Activated naive CD4-positive, alpha-beta T cell treated with anti-CD3 and anti-CD28 coated beads for 36 hours (primary cell): ENCODE measurements at regions of chr16 and their contacts with region 1.

Region 1: GRCh38 chr16:29862884-29863668 is at the start of gene CDIPT:
- DNase-seq: peak; percentile 96
- H3K4me3 Mint-ChIP-seq: peak within 1 kb of the TSS; percentile 95
- H3K27ac Mint-ChIP-seq: peak within 1 kb of the TSS; percentile 99
- H3K4me1 Mint-ChIP-seq: peaks cover 22% of the 10 kb centered on the region
- H3K27me3 Mint-ChIP-seq: no peaks in the 10 kb centered on the region
- total RNA-seq, gene CDIPT: 29.0 to 31.0 TPM

Region 2: DNA sequence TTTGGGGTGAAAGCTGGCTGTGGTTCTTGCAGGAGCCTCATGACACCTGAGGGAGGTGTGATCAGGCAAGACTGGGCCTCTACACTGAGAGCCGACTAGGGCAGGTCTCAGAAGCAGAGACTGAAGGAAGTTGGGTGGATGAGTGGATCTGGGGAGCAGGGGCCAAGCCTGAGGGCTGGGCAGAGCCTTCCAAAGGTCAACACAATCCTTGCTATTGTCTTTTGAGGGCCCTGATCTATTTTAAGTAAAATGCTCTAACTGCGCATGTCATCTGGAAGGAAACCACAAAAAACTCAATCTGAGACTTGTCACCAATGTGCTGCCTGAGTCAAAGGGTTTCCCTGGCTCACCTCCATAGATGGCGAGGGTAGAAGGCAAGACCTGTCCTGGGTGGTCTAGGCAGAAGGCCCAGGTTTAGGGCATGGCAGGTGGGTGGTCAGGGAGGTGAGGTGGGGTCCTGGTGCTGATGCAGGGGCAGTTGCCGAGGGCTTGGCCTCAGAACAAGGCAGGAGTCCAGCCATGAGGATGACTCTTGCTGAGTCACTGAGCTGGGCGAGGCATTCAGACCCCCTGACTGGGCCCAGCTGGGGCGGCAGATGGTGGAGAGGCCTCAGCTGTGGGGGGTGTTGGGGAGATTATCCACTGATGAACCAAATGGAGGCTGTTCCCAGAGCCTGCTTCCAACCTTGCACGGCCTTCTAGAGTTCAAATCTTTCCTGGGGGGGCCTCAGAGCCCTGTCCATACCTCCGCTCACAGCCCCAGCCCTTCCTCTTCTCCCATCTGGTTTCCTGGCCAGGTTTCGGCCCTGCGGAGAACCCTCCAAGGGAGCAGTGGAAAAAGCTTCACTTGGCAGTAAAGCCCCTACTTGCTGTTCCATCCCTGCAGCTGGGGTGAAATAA is 37.7 kb before region 1 on chr16:
- CTCF ChIA-PET with region 1: no interaction called
- intact Hi-C with region 1: loop called (anchors 1 kb)
- DNase-seq: peak; percentile 78
- H3K4me3 Mint-ChIP-seq: peak overlapping the region; percentile 55
- H3K27ac Mint-ChIP-seq: peak overlapping the region; percentile 90
- H3K4me1 Mint-ChIP-seq: peaks cover 81% of the 10 kb centered on the region
- H3K27me3 Mint-ChIP-seq: no peaks in the 10 kb centered on the region

Region 3: GRCh38 chr16:29909391-29909790 is 46.3 kb after region 1 on chr16:
- CTCF ChIA-PET with region 1: no interaction called
- intact Hi-C with region 1: no loop called
- DNase-seq: no peak
- H3K4me3 Mint-ChIP-seq: no peak overlapping the region
- H3K27ac Mint-ChIP-seq: no peak overlapping the region
- H3K4me1 Mint-ChIP-seq: no peaks in the 10 kb centered on the region
- H3K27me3 Mint-ChIP-seq: no peaks in the 10 kb centered on the region

Region 4: DNA sequence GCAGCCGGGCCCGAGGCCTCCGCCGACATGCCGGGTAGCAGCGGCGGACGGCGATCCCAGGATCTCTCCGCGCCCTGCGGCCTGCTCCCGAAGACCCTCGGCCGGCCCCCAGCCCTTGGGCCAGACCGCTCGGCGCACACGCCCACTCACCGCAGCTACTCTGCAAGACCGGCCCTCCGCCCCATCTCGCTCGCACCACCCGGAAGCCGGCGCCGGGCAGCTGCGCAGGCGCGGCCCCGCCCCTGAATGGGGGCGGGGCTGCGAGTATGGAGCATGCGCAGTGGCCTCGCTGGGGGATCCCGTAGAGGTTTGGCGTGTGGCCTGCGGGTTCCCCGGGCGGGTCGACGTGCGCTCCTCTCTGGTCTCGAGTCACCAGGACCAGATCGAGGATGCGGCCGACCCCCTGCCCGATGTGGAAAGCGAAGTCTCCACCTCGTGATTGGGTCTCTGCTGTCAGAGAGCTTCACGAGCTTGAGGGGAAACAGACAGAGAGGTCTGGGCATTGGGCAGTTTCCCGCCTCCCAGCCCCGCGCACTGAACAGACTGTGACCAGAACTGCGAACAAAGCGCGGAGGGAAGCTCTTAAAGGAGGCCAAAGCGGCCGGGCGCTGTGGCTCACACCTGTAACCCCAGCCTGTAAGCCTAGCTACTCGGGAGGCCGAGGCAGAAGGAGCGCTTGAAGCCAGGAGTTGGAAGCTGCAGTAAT is 63.1 kb after region 1 on chr16 and contains the start of gene KCTD13:
- CTCF ChIA-PET with region 1: no interaction called
- intact Hi-C with region 1: loop called (anchors 1 kb)
- DNase-seq: peak; percentile 86
- H3K4me3 Mint-ChIP-seq: peak within 1 kb of the TSS; percentile 91
- H3K27ac Mint-ChIP-seq: peak within 1 kb of the TSS; percentile 88
- H3K4me1 Mint-ChIP-seq: peaks cover 32% of the 10 kb centered on the region
- H3K27me3 Mint-ChIP-seq: no peaks in the 10 kb centered on the region
- total RNA-seq, gene KCTD13: 25.8 to 29.4 TPM

Region 5: GRCh38 chr16:29973384-29974246 is 110.5 kb after region 1 on chr16 and contains the start of gene TAOK2:
- CTCF ChIA-PET with region 1: interaction called, 3 read pairs
- intact Hi-C with region 1: loop called (anchors 1 kb)
- DNase-seq: peak; percentile 95
- H3K4me3 Mint-ChIP-seq: peak within 1 kb of the TSS; percentile 97
- H3K27ac Mint-ChIP-seq: peak within 1 kb of the TSS; percentile 82
- H3K4me1 Mint-ChIP-seq: peaks cover 28% of the 10 kb centered on the region
- H3K27me3 Mint-ChIP-seq: no peaks in the 10 kb centered on the region
- total RNA-seq, gene TAOK2: 20.9 to 21.6 TPM

Region 6: GRCh38 chr16:30005341-30006094 is 142.4 kb after region 1 on chr16:
- CTCF ChIA-PET with region 1: no interaction called
- intact Hi-C with region 1: loop called (anchors 1 kb)
- DNase-seq: peak; percentile 49
- H3K4me3 Mint-ChIP-seq: no peak overlapping the region
- H3K27ac Mint-ChIP-seq: no peak overlapping the region
- H3K4me1 Mint-ChIP-seq: peaks cover 3% of the 10 kb centered on the region
- H3K27me3 Mint-ChIP-seq: peaks cover 11% of the 10 kb centered on the region